ENCODE measurements at regions of chr7 and their contacts with region 1.

Region 1: GRCh38 chr7:13279854-13280435 is 592.5 kb downstream of the ARL4A start:
- DNase-seq: no peak
- ATAC-seq: no peak
- H3K4me3 ChIP-seq: no peak overlapping the region
- H3K27ac ChIP-seq: no peak overlapping the region
- H3K4me1 ChIP-seq: no peaks in the 10 kb centered on the region
- H3K27me3 ChIP-seq: no peaks in the 10 kb centered on the region
- CTCF ChIP-seq: peak in 8 of 9 donors; percentile 22 to 68 (median 52)

Region 2: GRCh38 chr7:13017333-13017853 is 262.6 kb before region 1 on chr7:
- intact Hi-C with region 1: no loop called
- DNase-seq: no peak
- ATAC-seq: no peak
- H3K4me3 ChIP-seq: no peak overlapping the region
- H3K27ac ChIP-seq: no peak overlapping the region
- H3K4me1 ChIP-seq: peaks cover 0 to 8% (median 0%) of the 10 kb centered on the region in 9 donors
- H3K27me3 ChIP-seq: no peaks in the 10 kb centered on the region
- CTCF ChIP-seq: no peak

Region 3: DNA sequence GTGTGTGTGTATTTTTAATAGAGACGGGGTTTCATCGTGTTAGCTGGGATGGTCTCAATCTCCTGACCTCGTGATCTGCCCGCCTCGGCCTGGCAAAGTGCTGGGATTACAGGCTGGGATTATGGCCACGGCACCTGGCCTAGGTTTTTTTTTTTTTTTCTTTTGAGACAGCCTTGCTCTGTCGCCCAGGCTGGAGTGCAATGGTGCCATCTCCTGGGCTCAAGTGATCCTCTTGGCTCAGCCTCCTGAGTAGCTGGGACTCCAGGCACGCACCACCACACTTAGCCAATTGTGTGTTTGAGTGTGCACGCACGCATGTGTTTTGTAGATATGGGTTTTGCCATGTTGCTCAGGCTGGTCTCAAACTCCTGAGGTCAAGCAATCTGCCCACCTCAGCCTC is 79.7 kb after region 1 on chr7:
- intact Hi-C with region 1: no loop called
- DNase-seq: no peak
- ATAC-seq: no peak
- H3K4me3 ChIP-seq: no peak overlapping the region
- H3K27ac ChIP-seq: no peak overlapping the region
- H3K4me1 ChIP-seq: no peaks in the 10 kb centered on the region
- H3K27me3 ChIP-seq: no peaks in the 10 kb centered on the region
- CTCF ChIP-seq: no peak

Region 4: GRCh38 chr7:13725591-13725990 is 445.6 kb after region 1 on chr7:
- intact Hi-C with region 1: loop called in 1 of 10 experiments (anchors 5 kb)
- DNase-seq: no peak
- ATAC-seq: no peak
- H3K4me3 ChIP-seq: no peak overlapping the region
- H3K27ac ChIP-seq: no peak overlapping the region
- H3K4me1 ChIP-seq: no peaks in the 10 kb centered on the region
- H3K27me3 ChIP-seq: no peaks in the 10 kb centered on the region
- CTCF ChIP-seq: peak in 4 of 9 donors; percentile 5 to 28 (median 17)

Region 5: DNA sequence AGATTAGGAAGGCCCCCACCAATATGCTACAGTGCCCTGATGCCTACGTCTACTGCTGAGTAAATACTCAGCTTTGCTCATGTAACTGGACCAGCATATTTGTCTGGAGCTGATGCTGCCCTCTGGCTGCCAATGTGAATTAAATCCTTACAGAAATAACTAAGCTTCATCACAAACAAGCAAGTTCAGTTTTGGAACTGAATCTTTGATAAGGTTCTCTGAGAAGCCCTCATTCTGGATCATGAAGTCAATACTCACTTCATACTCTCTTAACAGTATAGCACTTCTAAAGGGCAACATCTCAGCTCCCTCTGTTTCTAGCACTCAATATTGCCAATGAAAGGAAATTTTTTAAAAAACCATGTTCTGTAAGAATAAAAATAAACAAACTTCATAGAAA is 462.9 kb after region 1 on chr7:
- intact Hi-C with region 1: loop called in 5 of 10 experiments (anchors 5 to 10 kb)
- DNase-seq: peak in 1 of 2 donors; percentile 18
- ATAC-seq: peak in 7 of 8 donors; percentile 59 to 81 (median 70)
- H3K4me3 ChIP-seq: no peak overlapping the region
- H3K27ac ChIP-seq: no peak overlapping the region
- H3K4me1 ChIP-seq: peaks cover 0 to 16% (median 10%) of the 10 kb centered on the region in 9 donors
- H3K27me3 ChIP-seq: no peaks in the 10 kb centered on the region
- CTCF ChIP-seq: peak; percentile 10 to 65 (median 52)

Region 6: GRCh38 chr7:13908667-13909397 is 628.9 kb after region 1 on chr7:
- intact Hi-C with region 1: no loop called
- DNase-seq: no peak
- ATAC-seq: no peak
- H3K4me3 ChIP-seq: no peak overlapping the region
- H3K27ac ChIP-seq: no peak overlapping the region
- H3K4me1 ChIP-seq: peaks cover 0 to 24% (median 8%) of the 10 kb centered on the region in 9 donors
- H3K27me3 ChIP-seq: no peaks in the 10 kb centered on the region
- CTCF ChIP-seq: no peak

Region 7: DNA sequence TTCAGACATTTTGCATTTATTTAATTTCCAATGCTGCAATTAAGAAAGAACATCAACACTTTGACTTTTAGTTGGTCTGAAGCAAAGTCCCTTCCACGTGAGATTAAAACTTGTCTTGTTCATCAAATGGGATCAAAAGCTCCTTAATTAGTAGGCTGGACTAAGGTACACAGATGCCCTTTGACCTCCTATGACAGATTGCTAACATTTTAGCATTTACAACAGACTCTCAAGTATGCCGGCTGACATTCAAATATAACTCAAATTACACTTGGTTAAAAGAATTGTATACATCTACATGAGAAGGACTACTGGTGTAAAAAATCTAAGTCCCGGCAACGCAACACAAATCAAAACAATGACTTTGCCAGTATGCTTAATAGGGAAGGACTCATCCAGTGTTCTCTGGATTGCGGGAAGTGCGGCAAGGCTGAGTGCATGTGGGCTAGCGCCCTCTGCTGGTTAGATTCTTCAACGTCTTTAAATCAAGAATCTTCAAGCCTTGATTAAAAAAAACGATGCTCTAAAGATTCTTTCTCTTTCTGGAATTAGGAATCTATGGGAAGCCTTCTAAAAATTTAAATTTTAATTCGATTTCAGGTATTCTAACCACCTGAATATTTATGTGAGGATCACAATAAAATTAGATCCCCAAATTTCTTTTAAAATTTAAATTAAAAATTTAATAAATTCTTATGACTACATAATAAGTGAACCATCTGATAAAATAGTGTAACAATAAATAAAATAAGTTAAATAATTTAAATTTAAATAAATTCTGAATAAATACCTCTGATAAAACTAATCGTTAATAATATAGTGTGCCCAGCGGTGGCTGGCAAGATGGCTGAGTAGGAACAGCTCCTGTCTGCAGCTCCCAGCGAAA is 1177.9 kb after region 1 on chr7:
- intact Hi-C with region 1: loop called in 9 of 10 experiments (anchors 5 to 10 kb)
- DNase-seq: peak; percentile 41 to 73
- ATAC-seq: peak in 7 of 8 donors; percentile 55 to 87 (median 79)
- H3K4me3 ChIP-seq: peak overlapping the region in 4 of 10 donors; percentile 13 to 26 (median 18)
- H3K27ac ChIP-seq: peak overlapping the region in 1 of 10 donors; percentile 37
- H3K4me1 ChIP-seq: peaks cover 0 to 7% (median 0%) of the 10 kb centered on the region in 9 donors
- H3K27me3 ChIP-seq: no peaks in the 10 kb centered on the region
- CTCF ChIP-seq: peak; percentile 80 to 93 (median 89)

Region 8: GRCh38 chr7:14691597-14692203 is 1411.8 kb after region 1 on chr7:
- intact Hi-C with region 1: loop called (anchors 2 to 10 kb)
- DNase-seq: peak; percentile 20 to 38
- ATAC-seq: no peak
- H3K4me3 ChIP-seq: no peak overlapping the region
- H3K27ac ChIP-seq: no peak overlapping the region
- H3K4me1 ChIP-seq: peaks cover 0 to 20% (median 0%) of the 10 kb centered on the region in 9 donors
- H3K27me3 ChIP-seq: no peaks in the 10 kb centered on the region
- CTCF ChIP-seq: peak; percentile 63 to 91 (median 87)